OCI-LY7 (cell line): ENCODE measurements at regions of chr1 and their contacts with region 1.

Region 1: GRCh38 chr1:178552856-178553255 is 39.9 kb downstream of the TEX35 start:
- DNase-seq: no peak
- H3K4me3 ChIP-seq: no peak overlapping the region
- H3K27ac ChIP-seq: no peak overlapping the region
- H3K4me1 ChIP-seq: no peaks in the 10 kb centered on the region
- CTCF ChIP-seq: no peak

Region 2: GRCh38 chr1:178566187-178566586 is 13.3 kb after region 1 on chr1:
- CTCF ChIA-PET with region 1: no interaction called
- POLR2A ChIA-PET with region 1: interaction called, 10 read pairs
- intact Hi-C with region 1: no loop called
- DNase-seq: no peak
- H3K4me3 ChIP-seq: no peak overlapping the region
- H3K27ac ChIP-seq: no peak overlapping the region
- H3K4me1 ChIP-seq: peaks cover 18% of the 10 kb centered on the region
- CTCF ChIP-seq: no peak

Region 3: DNA sequence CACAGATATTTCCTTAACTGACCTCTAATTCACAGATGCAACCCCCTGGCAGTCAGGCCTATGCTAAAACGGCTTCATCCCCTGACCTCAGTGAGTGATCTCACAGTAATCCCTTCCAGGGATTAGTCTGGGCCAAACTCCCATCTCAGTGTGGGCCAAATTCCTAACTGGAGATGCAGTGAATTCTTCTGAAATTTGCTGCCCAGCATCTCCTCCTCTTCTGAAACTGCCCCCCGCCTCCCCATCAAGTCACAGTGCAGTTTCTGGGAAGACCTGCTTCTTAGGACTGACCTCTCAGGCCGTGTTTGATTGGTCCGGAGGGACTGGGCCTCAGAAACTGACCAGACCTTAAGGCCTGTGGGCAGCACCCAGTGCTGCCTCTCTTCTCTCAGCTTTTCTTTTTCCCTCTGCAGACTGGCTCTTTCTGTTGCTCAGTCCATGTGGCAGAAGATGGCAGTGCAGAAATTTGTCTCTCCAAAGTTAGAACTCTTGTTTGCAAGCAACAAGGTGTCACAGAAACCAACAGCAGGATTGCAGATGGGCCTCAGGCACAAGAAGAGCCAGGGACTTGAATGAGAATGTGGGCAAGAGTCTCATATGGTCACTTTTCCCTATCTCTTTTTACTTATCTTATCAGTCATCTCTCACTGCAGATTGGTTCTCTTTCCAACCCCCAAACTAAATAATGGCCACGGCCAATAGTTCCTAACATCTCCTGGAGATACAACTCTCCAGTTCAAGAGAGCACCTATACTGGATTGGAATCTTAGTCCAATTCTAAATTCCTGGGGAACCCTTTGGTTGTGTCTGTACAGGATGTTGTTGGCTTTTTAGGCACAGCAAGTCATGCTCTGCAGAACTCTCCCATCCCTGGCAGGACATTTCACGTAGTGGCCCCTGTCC is 76.6 kb after region 1 on chr1:
- CTCF ChIA-PET with region 1: no interaction called
- POLR2A ChIA-PET with region 1: no interaction called
- intact Hi-C with region 1: no loop called
- DNase-seq: no peak
- H3K4me3 ChIP-seq: no peak overlapping the region
- H3K27ac ChIP-seq: no peak overlapping the region
- H3K4me1 ChIP-seq: no peaks in the 10 kb centered on the region
- CTCF ChIP-seq: no peak